HepG2 (cell line): ENCODE measurements at regions of chr5 and their contacts with region 1.

Region 1: GRCh38 chr5:39106322-39106721 is 32.1 kb upstream of the RICTOR start:
- DNase-seq: no peak
- ATAC-seq: no peak
- H3K4me3 ChIP-seq: no peak overlapping the region
- H3K27ac ChIP-seq: no peak overlapping the region
- H3K4me1 ChIP-seq: peaks cover 32% of the 10 kb centered on the region
- H3K27me3 ChIP-seq: no peaks in the 10 kb centered on the region
- CTCF ChIP-seq: no peak
- EP300 ChIP-seq: no peak
- POLR2A ChIP-seq: no peak
- RAD21 ChIP-seq: no peak

Region 2: DNA sequence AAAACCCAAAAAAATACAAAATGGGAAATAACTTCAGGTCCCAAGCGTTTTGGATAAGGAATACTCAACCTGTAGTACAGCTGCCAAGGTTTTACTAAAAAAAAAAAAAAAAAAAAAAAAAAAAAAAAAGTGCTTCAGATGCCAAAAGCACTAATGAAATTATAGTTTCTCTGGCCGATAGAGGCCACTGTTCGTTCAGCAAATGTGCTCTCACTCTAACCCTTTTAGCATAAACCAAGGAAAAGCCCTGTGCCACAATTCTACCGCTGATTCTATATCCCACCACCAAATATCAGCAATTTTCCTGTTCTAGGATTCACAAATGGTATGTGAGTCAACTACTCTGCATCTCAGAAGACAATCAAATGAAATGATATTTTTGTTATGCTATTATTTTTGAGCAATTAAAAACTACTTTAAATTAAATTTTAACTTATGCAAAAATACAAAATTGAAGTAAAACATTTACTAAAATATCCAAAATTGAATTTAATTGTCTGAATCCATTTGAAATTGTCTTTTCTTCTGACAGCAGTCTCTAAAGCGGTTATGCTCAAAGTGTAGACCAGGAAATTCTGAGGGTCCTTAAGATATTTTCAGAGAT is 111.9 kb before region 1 on chr5:
- CTCF ChIA-PET with region 1: no interaction called
- POLR2A ChIA-PET with region 1: no interaction called
- in situ Hi-C with region 1: no loop called
- intact Hi-C with region 1: loop called (anchors 1 kb)
- DNase-seq: peak; percentile 64
- ATAC-seq: peak; percentile 83
- H3K4me3 ChIP-seq: no peak overlapping the region
- H3K27ac ChIP-seq: no peak overlapping the region
- H3K4me1 ChIP-seq: no peaks in the 10 kb centered on the region
- H3K27me3 ChIP-seq: no peaks in the 10 kb centered on the region
- CTCF ChIP-seq: peak; percentile 43
- EP300 ChIP-seq: no peak
- POLR2A ChIP-seq: no peak
- RAD21 ChIP-seq: no peak